ENCODE measurements at regions of chr1 and their contacts with region 1.

Region 1: DNA sequence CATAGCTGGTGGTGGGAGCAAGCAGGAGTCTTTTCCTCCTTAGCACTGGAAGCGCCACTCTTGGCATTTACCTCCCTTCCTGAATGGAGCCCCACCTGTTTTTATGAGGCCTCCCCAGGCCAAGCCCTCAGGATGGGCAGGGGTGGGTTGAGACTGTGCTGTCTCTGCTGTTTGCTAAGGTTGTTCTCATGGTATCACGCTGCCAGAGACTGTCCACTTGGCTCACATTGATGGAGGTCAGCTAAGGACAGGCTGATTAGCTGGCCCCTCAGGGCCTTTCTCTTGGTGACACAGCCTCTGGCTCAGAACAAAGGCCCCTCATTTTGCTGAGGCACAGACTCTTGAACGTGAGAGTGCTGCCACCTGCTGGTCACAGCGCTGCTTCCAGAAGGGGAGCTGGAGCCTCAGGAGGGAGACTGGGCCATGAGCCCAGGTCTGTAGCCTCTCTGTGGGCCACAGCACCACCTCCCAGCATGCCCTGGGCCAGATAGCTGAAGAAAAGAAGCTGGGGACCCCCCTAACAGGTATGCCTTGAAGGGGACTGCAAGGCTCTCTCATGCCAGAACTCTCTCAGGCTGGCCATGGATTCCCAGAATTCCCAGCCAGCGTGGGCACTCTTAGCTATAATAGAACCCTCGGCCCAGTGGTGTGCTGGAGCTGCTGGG is 85.6 kb downstream of the CD58 start:
- DNase-seq: peak; percentile 81 to 97 (median 93)

Region 2: GRCh38 chr1:116377541-116378529 is 107.4 kb before region 1 on chr1:
- intact Hi-C with region 1: loop called (anchors 5 kb)
- DNase-seq: peak; percentile 45 to 88 (median 72)

Region 3: DNA sequence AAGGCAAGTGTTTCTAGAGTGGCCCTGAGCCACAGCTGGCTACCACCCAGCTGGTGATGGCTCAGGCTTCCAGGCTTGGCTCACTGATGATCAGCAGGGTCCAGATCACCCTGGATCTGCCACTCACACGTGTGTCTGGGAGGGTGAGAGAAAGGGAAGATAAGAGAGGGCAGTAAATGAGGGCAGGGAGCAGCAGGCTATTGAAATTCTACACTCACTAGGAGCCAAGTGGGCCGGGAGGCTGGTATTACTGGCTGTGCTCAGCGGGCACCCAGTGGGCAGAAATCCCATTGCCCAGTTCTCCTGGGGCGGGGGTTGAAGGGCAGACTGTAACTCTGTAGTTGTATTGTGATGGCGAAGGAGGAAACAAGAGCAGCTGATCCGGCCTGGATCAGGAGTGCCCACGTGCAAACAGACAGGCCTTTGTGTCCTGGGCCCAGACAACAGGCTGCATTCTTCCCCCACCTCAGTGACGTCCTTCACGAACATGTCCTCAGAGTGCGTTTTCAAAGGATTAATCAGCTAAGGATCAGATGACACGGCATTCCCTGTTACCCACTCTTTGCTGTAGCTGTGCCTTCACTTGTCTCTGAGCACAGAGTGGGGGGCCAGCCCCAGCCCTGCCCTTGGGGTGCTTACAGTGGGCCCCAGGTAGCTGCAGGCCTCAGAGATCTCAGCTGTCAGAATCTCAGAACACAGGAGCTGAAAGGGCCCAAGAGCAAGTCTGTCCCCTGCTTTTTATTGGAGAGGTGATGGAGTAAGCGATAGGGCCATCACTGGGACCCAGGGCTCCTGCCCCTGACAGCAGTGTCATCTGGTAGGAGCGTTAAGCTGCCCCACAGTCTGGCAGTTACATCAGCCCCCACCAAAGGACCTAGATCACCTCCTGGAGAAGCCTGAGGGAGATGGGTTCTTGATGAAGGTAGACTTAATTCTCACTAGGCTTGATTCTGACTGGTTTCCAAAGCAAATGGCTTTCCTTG is 51.6 kb before region 1 on chr1:
- intact Hi-C with region 1: loop called (anchors 5 kb)
- DNase-seq: peak; percentile 79 to 97 (median 92)